Posterior vena cava (tissue), 2 donors: ENCODE measurements at regions of chr3 and their contacts with region 1.

Region 1: GRCh38 chr3:56711344-56711743 is 28.3 kb upstream of the TASOR start:
- DNase-seq: no peak

Region 2: DNA sequence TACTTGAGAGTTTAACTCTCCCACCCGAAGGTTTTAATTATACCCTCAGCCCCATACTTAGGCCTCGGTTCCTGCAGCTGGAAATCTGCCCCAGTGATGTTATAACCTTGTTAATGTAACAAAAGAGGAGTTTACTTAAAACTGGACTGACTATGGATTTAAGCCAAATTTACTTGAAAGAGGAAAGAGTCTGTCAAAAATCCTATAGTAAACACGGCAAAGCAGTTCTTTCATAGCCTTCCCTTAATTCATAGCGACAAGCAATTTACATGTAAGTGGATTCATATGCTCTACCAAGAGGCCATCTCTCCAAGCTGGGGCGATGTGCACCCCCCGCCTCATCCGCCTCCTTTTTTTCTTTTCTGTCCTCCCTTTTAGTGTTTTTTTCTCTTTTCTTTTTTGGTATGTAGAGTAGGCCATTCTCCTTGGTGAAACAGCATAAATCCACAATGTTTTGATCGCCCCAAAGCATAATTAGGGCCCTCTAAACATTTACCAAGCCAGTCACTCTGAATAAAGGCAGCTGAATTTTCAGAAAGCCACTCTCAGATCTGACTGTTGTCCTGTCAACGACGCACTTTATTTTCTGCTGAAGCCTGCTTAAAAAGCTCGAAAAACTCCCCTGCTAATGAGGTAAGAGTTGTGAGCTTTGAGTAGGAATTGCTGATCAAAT is 851.2 kb before region 1 on chr3:
- intact Hi-C with region 1: no loop called
- DNase-seq: no peak

Region 3: DNA sequence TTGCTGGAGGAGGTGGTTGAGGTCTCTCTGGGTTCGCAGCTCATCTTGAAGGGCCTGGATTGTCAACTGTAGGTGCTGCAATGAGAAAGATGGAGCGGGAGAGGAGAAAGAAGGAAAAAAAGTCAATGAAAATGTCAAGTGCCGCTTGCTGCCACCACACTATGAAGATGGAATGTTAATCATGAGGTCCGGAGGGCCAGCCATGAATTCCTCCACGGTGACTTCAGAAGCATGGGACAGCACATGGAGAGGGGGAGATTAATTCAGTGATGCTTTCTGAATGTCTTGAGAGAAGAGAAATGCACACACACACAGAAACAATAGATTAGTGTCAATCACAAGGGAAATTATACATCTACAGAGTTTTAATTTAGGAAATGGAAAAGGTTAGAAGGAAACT is 415.0 kb before region 1 on chr3:
- intact Hi-C with region 1: loop called in 1 of 2 experiments (anchors 5 kb)
- DNase-seq: no peak

Region 4: GRCh38 chr3:56629047-56629446 is 82.3 kb before region 1 on chr3:
- intact Hi-C with region 1: no loop called
- DNase-seq: no peak

Region 5: GRCh38 chr3:56904552-56905215 is 193.3 kb after region 1 on chr3:
- intact Hi-C with region 1: loop called in 1 of 2 experiments (anchors 5 kb)
- DNase-seq: no peak

Region 6: GRCh38 chr3:56954125-56954524 is 242.8 kb after region 1 on chr3:
- intact Hi-C with region 1: no loop called
- DNase-seq: no peak